ENCODE measurements at regions of chr2 and their contacts with region 1.

Region 1: DNA sequence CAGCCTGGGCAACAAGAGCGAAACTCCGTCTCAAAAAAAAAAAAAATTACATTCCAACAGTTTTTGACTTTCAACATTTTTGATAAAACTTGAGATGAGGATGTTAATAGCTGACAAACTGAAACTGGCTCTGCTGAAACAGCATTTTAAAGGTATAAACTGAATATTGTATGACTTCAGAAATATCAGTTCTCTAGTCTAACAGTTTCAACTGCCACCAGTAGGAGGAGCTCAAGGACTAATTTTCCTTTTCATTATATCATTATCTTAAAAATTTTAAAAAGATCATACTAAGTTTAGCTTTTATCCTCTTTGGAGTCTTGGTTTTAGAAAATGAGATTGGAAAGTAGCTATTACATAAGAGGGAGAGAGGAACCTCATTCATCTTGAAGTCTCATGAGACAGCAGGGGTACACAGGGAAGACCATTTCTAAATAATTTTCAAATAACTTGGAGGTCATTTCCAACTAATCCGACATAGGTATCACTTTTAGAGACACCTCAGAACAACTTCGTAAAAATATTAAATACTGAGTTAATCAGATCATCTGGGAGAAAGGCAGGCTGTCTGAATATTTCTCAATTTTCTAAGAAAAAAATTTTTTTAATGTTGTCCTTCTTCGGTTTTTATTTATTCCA is 37.6 kb upstream of the MCM6 start:
- DNase-seq: peak; percentile 47
- ATAC-seq: peak; percentile 51; the same call in 1 of the 2 replicates
- H3K4me3 ChIP-seq: no peak overlapping the region
- H3K27ac ChIP-seq: no peak overlapping the region
- H3K4me1 ChIP-seq: no peaks in the 10 kb centered on the region
- H3K27me3 ChIP-seq: no peaks in the 10 kb centered on the region
- CTCF ChIP-seq: peak; percentile 79
- POLR2A ChIP-seq: no peak
- RAD21 ChIP-seq: peak; percentile 70

Region 2: GRCh38 chr2:135925571-135925970 is 11.7 kb after region 1 on chr2:
- CTCF ChIA-PET with region 1: interaction called, 10 read pairs
- POLR2A ChIA-PET with region 1: no interaction called
- dilution Hi-C with region 1: no loop called
- in situ Hi-C with region 1: no loop called
- intact Hi-C with region 1: no loop called
- DNase-seq: peak; percentile 74
- ATAC-seq: peak; percentile 79
- H3K4me3 ChIP-seq: no peak overlapping the region
- H3K27ac ChIP-seq: no peak overlapping the region
- H3K4me1 ChIP-seq: peaks cover 2% of the 10 kb centered on the region; the same call in 1 of the 2 replicates
- H3K27me3 ChIP-seq: no peaks in the 10 kb centered on the region
- CTCF ChIP-seq: no peak
- POLR2A ChIP-seq: no peak
- RAD21 ChIP-seq: no peak

Region 3: DNA sequence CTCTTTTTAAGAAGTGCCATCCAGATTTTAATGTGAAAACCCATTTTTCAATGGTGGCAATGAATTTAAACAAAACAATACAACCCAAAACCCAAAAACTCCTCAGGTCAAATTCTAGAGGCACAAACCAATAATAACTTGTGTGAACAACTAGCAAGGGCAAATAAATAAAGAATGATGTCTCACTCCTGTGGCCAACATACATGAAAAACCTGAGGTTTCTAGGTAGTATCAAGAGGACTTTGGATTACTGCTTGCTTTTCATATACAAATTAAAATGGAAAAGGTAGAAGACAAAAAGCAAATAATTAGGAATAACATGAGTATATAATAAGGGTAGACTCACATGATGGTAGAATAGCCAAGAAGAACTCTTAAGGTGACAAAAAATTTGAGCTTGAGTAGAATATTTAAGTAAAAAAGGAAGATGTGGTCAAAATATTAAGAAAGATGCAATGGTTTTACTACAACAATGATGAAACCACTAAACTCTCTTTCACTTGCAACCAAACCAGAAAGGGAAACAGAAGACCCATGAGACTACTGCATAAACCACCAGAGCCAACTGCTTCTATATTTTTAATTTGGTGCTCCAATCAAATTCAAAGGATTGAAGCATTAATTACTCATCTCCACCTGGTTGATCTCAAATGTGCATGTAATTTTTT is 18.1 kb after region 1 on chr2:
- CTCF ChIA-PET with region 1: interaction called, 10 read pairs
- POLR2A ChIA-PET with region 1: no interaction called
- dilution Hi-C with region 1: no loop called
- in situ Hi-C with region 1: no loop called
- intact Hi-C with region 1: no loop called
- DNase-seq: no peak
- ATAC-seq: no peak
- H3K4me3 ChIP-seq: no peak overlapping the region
- H3K27ac ChIP-seq: no peak overlapping the region
- H3K4me1 ChIP-seq: no peaks in the 10 kb centered on the region
- H3K27me3 ChIP-seq: no peaks in the 10 kb centered on the region
- CTCF ChIP-seq: no peak
- POLR2A ChIP-seq: no peak
- RAD21 ChIP-seq: no peak

Region 4: DNA sequence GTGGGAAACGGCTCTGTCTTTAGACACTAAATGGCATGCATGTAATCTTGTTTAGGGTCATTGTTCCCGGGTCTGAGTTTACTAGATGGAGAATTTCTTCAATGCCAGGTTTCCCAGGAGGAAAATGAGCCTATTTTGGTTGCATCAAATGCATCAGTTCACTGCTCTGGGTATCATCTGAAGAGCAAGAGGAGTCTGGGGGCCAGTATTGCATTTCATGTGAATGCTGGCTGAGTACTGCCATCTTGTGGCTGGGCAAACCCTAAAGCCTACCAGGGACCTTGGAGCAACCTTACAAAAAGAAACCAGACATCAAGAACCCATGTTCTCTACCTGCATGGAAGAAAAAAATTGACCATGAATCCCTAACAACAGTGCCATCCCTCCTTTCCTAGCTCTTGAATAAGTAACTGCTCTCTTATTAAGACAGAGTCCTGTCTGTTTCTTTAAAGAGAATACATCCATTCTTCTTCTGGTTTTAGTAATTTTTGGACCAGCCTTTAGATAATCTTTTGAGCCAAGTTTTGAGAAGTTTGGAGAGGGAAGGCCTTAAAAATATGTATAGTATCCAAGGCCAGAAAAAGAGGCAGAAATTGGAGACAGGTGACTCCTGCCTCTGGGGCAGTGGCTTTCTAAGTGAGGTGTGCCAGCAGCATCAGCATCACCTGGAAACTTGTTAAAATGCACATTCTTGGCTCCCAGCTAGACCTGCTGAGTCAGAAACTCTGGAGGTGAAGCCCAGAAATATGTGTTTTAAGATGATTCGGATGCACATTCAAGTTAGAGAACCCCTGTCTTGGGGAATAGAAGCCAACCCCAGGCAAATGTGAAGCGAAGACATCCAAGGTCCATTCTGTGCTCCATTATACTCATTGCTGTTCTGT is 465.1 kb after region 1 on chr2:
- CTCF ChIA-PET with region 1: interaction called, 6 read pairs
- POLR2A ChIA-PET with region 1: no interaction called
- dilution Hi-C with region 1: no loop called
- in situ Hi-C with region 1: loop called (anchors 5 kb)
- intact Hi-C with region 1: loop called (anchors 1 kb)
- DNase-seq: peak; percentile 36
- ATAC-seq: peak; percentile 70
- H3K4me3 ChIP-seq: no peak overlapping the region
- H3K27ac ChIP-seq: no peak overlapping the region
- H3K4me1 ChIP-seq: no peaks in the 10 kb centered on the region
- H3K27me3 ChIP-seq: no peaks in the 10 kb centered on the region
- CTCF ChIP-seq: peak; percentile 52
- POLR2A ChIP-seq: no peak
- RAD21 ChIP-seq: peak; percentile 63

Region 5: GRCh38 chr2:136384531-136385303 is 470.9 kb after region 1 on chr2:
- CTCF ChIA-PET with region 1: interaction called, 6 read pairs
- POLR2A ChIA-PET with region 1: no interaction called
- dilution Hi-C with region 1: no loop called
- in situ Hi-C with region 1: loop called (anchors 5 kb)
- intact Hi-C with region 1: loop called (anchors 1 kb)
- DNase-seq: peak; percentile 5
- ATAC-seq: peak; percentile 63
- H3K4me3 ChIP-seq: no peak overlapping the region
- H3K27ac ChIP-seq: no peak overlapping the region
- H3K4me1 ChIP-seq: no peaks in the 10 kb centered on the region
- H3K27me3 ChIP-seq: no peaks in the 10 kb centered on the region
- CTCF ChIP-seq: peak; percentile 35
- POLR2A ChIP-seq: no peak
- RAD21 ChIP-seq: peak; percentile 54

Region 6: GRCh38 chr2:136423516-136423996 is 509.7 kb after region 1 on chr2:
- CTCF ChIA-PET with region 1: no interaction called
- POLR2A ChIA-PET with region 1: no interaction called
- dilution Hi-C with region 1: no loop called
- in situ Hi-C with region 1: no loop called
- intact Hi-C with region 1: loop called (anchors 2 kb)
- DNase-seq: peak; percentile 47
- ATAC-seq: peak; percentile 100
- H3K4me3 ChIP-seq: peak overlapping the region; percentile 58
- H3K27ac ChIP-seq: no peak overlapping the region
- H3K4me1 ChIP-seq: no peaks in the 10 kb centered on the region
- H3K27me3 ChIP-seq: no peaks in the 10 kb centered on the region; the same call in 1 of the 2 replicates
- CTCF ChIP-seq: peak; percentile 73
- POLR2A ChIP-seq: no peak
- RAD21 ChIP-seq: peak; percentile 56

Region 7: DNA sequence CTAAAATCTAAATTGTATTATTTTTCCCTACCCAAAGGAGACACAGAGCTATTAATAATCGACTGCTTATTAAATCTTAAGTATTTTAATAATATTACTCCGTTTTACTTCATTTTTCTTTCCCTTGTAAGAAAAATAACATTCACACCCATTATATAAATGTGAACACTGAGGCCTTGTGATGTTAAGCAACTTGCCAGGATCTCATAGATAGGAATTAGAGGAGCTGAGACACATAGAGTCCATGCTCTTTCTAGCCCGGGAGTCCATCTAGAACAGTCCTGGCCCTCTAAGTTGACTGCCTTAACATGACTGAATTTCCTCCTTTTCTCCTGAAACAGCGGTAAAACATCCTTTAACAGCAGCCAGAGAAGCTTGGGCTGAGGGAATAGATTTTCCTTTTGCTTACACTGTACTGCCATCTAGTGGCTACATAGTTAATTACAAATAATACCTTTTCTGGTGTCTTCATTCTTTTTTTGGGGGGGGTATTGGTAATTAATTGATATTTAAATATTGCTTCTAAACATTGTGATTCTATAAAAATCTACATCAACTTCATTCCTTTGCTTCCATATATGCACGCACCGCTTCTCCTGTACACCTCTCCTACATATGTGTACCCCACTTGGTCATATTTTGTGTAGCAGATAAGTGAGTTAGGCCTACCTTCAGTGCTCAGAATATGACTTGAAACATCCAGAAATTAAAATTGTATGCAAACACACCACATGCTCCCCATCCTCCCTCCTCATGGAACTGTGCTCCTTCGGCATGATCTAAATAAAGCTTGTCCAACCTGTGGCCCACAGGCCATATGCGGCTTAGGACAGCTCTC is 1924.6 kb after region 1 on chr2:
- CTCF ChIA-PET with region 1: no interaction called
- POLR2A ChIA-PET with region 1: no interaction called
- dilution Hi-C with region 1: no loop called
- in situ Hi-C with region 1: loop called (anchors 25 kb)
- intact Hi-C with region 1: loop called (anchors 5 kb)
- DNase-seq: peak; percentile 49
- ATAC-seq: peak; percentile 83
- H3K4me3 ChIP-seq: no peak overlapping the region
- H3K27ac ChIP-seq: no peak overlapping the region
- H3K4me1 ChIP-seq: no peaks in the 10 kb centered on the region
- H3K27me3 ChIP-seq: no peaks in the 10 kb centered on the region
- CTCF ChIP-seq: peak; percentile 69
- POLR2A ChIP-seq: no peak
- RAD21 ChIP-seq: peak; percentile 81

Measured in IMR-90 (cell line).